GM13976 (cell line): ENCODE measurements at regions of chr1 and their contacts with region 1.

Region 1: DNA sequence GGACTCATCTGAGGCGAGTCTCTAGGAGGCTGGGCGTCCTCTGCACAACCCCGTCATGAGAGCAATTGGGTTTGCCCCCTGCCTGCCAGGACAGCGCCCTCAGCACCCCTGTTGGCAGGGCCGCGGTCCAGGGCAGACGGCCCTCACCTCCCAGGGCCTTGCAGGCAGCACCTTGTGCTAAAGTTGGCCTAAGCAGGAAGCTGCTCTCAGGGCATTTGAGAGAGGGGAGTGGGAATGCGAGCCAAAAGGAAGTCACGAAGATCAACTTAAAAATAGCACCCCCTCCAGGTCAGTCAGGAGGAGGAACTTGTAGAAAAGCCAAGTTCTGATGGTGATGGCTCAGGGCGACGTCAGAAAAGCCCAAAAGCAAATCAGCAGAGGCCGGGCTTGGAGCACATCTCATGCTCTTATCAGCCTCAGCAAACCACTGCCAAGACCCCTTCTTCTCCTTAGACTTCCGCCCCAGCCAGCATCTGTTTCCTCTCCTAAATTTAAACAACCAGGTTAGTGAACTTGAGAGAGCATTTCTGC is 12.6 kb upstream of the ADORA3 start:
- DNase-seq: peak; percentile 65
- CTCF ChIP-seq: peak; percentile 15

Region 2: GRCh38 chr1:111648806-111649205 is 132.7 kb after region 1 on chr1:
- in situ Hi-C with region 1: loop called (anchors 10 kb)
- DNase-seq: no peak
- CTCF ChIP-seq: no peak